Posterior cingulate gyrus (tissue), 11 donors: ENCODE measurements at regions of chr11 and their contacts with region 1.

Region 1: GRCh38 chr11:8566613-8567210 is 27.3 kb downstream of the STK33 start:
- DNase-seq: no peak

Region 2: GRCh38 chr11:8192016-8192895 is 374.5 kb before region 1 on chr11:
- intact Hi-C with region 1: loop called (anchors 2 kb)
- DNase-seq: peak; percentile 47 to 95 (median 80)

Region 3: GRCh38 chr11:8328848-8329330 is 237.8 kb before region 1 on chr11:
- intact Hi-C with region 1: loop called (anchors 5 kb)
- DNase-seq: peak; percentile 70 to 97 (median 80)